ENCODE measurements at regions of chr12 and their contacts with region 1.

Region 1: GRCh38 chr12:106136263-106136662 is 2.5 kb downstream of the NUAK1 start:
- DNase-seq: peak; percentile 92 to 93
- H3K4me3 ChIP-seq: peak overlapping the region; percentile 82 to 84
- H3K27ac ChIP-seq: peak overlapping the region; percentile 98 to 99
- H3K4me1 ChIP-seq: peaks cover 0 to 75% (median 55%) of the 10 kb centered on the region in 4 donors
- H3K27me3 ChIP-seq: no peaks in the 10 kb centered on the region
- CTCF ChIP-seq: peak; percentile 87 to 89

Region 2: GRCh38 chr12:105420659-105421240 is 715.5 kb before region 1 on chr12:
- intact Hi-C with region 1: loop called (anchors 5 kb)
- DNase-seq: peak; percentile 70 to 82
- H3K4me3 ChIP-seq: no peak overlapping the region
- H3K27ac ChIP-seq: no peak overlapping the region
- H3K4me1 ChIP-seq: peaks cover 0 to 17% (median 8%) of the 10 kb centered on the region in 4 donors
- H3K27me3 ChIP-seq: no peaks in the 10 kb centered on the region
- CTCF ChIP-seq: peak; percentile 86 to 95

Region 3: DNA sequence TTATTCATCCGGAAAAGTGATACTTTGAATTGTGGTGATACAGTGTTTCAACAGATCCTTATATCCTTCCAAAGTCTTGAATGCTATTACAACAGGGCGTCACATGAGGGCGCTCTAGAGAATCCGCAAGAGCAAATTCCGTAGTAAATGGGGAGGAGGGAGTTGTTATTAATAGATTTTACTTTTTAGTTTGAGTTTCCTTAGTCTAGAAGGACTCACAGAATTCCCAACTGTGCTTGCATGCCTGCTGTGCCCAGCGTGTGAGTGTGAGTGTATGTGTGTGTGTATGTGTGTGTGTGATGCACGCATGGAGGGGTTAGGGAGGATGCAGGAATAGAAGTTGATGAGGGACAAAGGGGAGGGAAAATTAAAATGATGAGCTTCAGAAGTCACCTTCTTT is 430.5 kb before region 1 on chr12:
- intact Hi-C with region 1: loop called (anchors 1 kb)
- DNase-seq: peak; percentile 45 to 70
- H3K4me3 ChIP-seq: no peak overlapping the region
- H3K27ac ChIP-seq: peak overlapping the region; percentile 46 to 70
- H3K4me1 ChIP-seq: peaks cover 0 to 18% (median 16%) of the 10 kb centered on the region in 4 donors
- H3K27me3 ChIP-seq: no peaks in the 10 kb centered on the region
- CTCF ChIP-seq: peak; percentile 81 to 85

Region 4: DNA sequence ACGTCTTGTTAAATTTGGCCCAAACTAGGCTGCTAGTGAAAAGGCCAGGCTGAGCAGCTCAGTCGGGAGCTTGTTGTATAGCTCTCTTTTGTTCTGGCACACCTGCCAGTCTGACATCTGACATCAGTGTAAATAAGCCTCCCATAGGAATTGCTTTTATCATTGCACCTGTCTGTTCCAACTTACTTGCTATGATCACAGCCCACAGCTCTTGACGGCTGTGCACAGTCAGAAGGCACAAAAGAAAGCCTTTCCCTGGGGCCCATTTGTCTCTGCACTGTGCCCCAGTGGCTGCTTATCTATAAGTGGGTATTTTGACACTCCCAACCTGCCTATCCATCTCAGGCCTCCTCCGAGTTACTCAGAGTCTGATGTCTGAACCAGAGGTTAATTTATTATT is 322.0 kb before region 1 on chr12:
- intact Hi-C with region 1: loop called (anchors 10 kb)
- DNase-seq: no peak
- H3K4me3 ChIP-seq: no peak overlapping the region
- H3K27ac ChIP-seq: no peak overlapping the region
- H3K4me1 ChIP-seq: peaks cover 0 to 39% (median 18%) of the 10 kb centered on the region in 4 donors
- H3K27me3 ChIP-seq: no peaks in the 10 kb centered on the region
- CTCF ChIP-seq: no peak

Region 5: GRCh38 chr12:106022568-106023012 is 113.7 kb before region 1 on chr12:
- intact Hi-C with region 1: loop called (anchors 10 kb)
- DNase-seq: no peak
- H3K4me3 ChIP-seq: no peak overlapping the region
- H3K27ac ChIP-seq: no peak overlapping the region
- H3K4me1 ChIP-seq: peaks cover 0 to 23% (median 7%) of the 10 kb centered on the region in 4 donors
- H3K27me3 ChIP-seq: no peaks in the 10 kb centered on the region
- CTCF ChIP-seq: no peak

Region 6: GRCh38 chr12:106037524-106038298 is 98.6 kb before region 1 on chr12:
- intact Hi-C with region 1: no loop called
- DNase-seq: no peak
- H3K4me3 ChIP-seq: no peak overlapping the region
- H3K27ac ChIP-seq: no peak overlapping the region
- H3K4me1 ChIP-seq: no peaks in the 10 kb centered on the region
- H3K27me3 ChIP-seq: no peaks in the 10 kb centered on the region
- CTCF ChIP-seq: no peak

Region 7: GRCh38 chr12:106073179-106073578 is 63.1 kb before region 1 on chr12:
- intact Hi-C with region 1: no loop called
- DNase-seq: no peak
- H3K4me3 ChIP-seq: no peak overlapping the region
- H3K27ac ChIP-seq: peak overlapping the region; percentile 64 to 78
- H3K4me1 ChIP-seq: peaks cover 0 to 74% (median 45%) of the 10 kb centered on the region in 4 donors
- H3K27me3 ChIP-seq: no peaks in the 10 kb centered on the region
- CTCF ChIP-seq: no peak

Region 8: GRCh38 chr12:106084014-106084671 is 52.1 kb before region 1 on chr12:
- intact Hi-C with region 1: loop called (anchors 5 kb)
- DNase-seq: no peak
- H3K4me3 ChIP-seq: no peak overlapping the region
- H3K27ac ChIP-seq: peak overlapping the region; percentile 78 to 86
- H3K4me1 ChIP-seq: peaks cover 4 to 90% (median 75%) of the 10 kb centered on the region in 4 donors
- H3K27me3 ChIP-seq: no peaks in the 10 kb centered on the region
- CTCF ChIP-seq: no peak

Region 9: DNA sequence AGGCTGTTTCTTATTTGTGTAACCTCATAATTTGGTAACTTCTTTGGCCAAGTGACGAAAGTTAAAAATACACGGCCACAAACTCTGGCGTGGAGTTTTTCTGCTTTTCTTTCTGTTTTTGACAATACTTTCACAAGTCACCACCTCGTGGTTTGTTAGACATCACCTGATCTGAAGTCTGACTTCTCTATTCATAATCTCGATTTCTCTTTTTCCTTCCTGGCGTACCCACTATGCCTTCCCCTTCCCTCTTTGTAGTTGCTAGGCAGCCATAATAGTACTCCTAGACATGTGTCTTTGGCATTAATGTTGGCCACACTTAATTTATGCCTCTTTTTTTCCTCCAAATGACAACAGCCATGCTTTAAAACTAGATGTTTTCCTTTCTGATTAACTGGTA is 318.8 kb after region 1 on chr12:
- intact Hi-C with region 1: no loop called
- DNase-seq: no peak
- H3K4me3 ChIP-seq: no peak overlapping the region
- H3K27ac ChIP-seq: no peak overlapping the region
- H3K4me1 ChIP-seq: no peaks in the 10 kb centered on the region
- H3K27me3 ChIP-seq: no peaks in the 10 kb centered on the region
- CTCF ChIP-seq: no peak

Region 10: DNA sequence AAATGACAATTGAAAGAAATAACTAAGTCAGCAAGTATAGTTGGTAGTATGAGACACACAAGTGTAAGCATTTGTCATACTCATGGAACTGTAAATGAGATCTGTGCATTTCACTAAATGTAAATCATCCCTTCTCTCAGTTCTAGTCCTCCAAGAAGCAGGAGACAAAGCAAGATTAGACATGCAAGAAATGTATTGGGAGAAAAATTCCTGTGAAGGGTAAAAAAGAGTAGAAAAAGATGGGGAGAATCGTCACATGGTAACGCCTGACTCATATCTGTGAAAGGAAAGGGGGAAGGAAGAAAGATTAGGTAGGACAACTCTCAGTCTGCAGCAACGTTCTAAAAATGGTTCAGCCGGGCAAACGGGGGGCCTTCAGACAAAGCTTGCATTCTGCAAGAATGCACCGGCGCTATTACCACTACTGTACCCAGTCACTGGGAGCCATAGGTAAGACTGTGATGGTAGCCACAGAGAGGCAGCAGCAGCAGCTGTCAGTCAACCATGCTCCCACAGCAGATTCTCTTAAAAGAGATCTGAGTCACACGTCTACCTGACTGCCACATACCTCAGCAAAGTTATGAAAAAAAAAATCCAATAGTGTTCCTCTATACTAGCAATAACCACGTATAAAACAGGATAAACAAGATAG is 428.5 kb after region 1 on chr12:
- intact Hi-C with region 1: no loop called
- DNase-seq: no peak
- H3K4me3 ChIP-seq: no peak overlapping the region
- H3K27ac ChIP-seq: no peak overlapping the region
- H3K4me1 ChIP-seq: no peaks in the 10 kb centered on the region
- H3K27me3 ChIP-seq: peaks cover 0 to 13% of the 10 kb centered on the region in 2 donors
- CTCF ChIP-seq: no peak

Measured in tibial artery (tissue), 4 donors.